A549 (cell line): ENCODE measurements at regions of chr1 and their contacts with region 1.

Region 1: DNA sequence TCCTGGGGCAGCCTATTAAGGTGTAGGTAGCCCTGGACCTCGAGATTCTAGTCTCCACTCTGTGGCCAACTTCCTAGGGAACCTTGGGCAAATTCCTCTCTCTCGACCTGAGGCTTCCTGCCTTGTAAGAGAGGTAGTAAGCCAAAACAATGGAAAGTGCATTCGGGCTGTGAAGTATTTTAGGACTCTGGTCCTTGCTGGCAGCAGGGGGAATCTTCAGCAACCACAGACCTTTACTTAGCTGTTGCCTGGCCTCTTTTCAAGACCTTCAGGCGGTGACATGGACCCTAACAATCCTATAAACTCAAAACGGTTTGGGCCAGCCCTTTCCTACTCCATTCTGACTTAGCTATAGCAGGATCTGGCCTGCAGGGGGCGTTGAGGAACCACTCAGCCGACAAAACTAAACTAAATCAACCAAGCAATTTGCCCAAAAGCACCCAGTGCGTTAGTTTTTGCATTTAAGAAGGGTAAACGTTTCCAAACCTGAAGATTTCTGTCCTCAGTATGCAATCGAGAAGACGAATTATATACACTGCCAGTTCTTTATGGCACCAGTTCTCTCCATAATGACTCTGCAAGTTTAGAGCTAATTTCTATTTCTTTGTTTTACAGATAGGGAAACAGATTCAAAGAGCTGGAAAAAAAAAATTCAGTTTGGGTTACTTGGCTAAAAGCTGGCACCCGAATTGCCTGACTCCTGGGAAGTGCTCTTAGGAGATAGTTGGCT is 10.9 kb upstream of the SESN2 start:
- DNase-seq: peak; percentile 58 to 72
- ATAC-seq: peak; percentile 63 to 75
- H3K4me3 ChIP-seq: peak overlapping the region; percentile 29; the same call in 1 of the 3 replicates
- H3K27ac ChIP-seq: peak overlapping the region; percentile 74 to 85
- H3K4me1 ChIP-seq: peaks cover 45% of the 10 kb centered on the region
- CTCF ChIP-seq: peak; percentile 78
- EP300 ChIP-seq: no peak
- POLR2A ChIP-seq: no peak
- RAD21 ChIP-seq: peak; percentile 85 to 86

Region 2: GRCh38 chr1:27959400-27960217 is 288.8 kb before region 1 on chr1 and contains the start of gene XKR8:
- CTCF ChIA-PET with region 1: no interaction called
- POLR2A ChIA-PET with region 1: no interaction called
- DNase-seq: peak; percentile 76 to 77
- ATAC-seq: peak; percentile 91 to 96
- H3K4me3 ChIP-seq: peak within 1 kb of the TSS; percentile 54
- H3K27ac ChIP-seq: peak within 1 kb of the TSS; percentile 78 to 92
- H3K4me1 ChIP-seq: peaks cover 14% of the 10 kb centered on the region
- CTCF ChIP-seq: peak; percentile 32; the same call in 1 of the 3 replicates
- EP300 ChIP-seq: no peak
- POLR2A ChIP-seq: peak; percentile 52
- RAD21 ChIP-seq: no peak
- polyA plus RNA-seq, gene XKR8: 3.3 and 4.2 TPM in 2 replicates

Region 3: GRCh38 chr1:28176492-28177470 is 71.7 kb before region 1 on chr1 and contains the start of gene PTAFR:
- CTCF ChIA-PET with region 1: no interaction called
- POLR2A ChIA-PET with region 1: no interaction called
- DNase-seq: no peak
- ATAC-seq: no peak
- H3K4me3 ChIP-seq: no peak within 1 kb of the TSS
- H3K27ac ChIP-seq: no peak within 1 kb of the TSS; a peak in 1 of 6 replicates
- H3K4me1 ChIP-seq: no peaks in the 10 kb centered on the region
- CTCF ChIP-seq: no peak
- EP300 ChIP-seq: no peak
- POLR2A ChIP-seq: no peak
- RAD21 ChIP-seq: no peak
- polyA plus RNA-seq, gene PTAFR: 0.58 and 0.83 TPM in 2 replicates

Region 4: DNA sequence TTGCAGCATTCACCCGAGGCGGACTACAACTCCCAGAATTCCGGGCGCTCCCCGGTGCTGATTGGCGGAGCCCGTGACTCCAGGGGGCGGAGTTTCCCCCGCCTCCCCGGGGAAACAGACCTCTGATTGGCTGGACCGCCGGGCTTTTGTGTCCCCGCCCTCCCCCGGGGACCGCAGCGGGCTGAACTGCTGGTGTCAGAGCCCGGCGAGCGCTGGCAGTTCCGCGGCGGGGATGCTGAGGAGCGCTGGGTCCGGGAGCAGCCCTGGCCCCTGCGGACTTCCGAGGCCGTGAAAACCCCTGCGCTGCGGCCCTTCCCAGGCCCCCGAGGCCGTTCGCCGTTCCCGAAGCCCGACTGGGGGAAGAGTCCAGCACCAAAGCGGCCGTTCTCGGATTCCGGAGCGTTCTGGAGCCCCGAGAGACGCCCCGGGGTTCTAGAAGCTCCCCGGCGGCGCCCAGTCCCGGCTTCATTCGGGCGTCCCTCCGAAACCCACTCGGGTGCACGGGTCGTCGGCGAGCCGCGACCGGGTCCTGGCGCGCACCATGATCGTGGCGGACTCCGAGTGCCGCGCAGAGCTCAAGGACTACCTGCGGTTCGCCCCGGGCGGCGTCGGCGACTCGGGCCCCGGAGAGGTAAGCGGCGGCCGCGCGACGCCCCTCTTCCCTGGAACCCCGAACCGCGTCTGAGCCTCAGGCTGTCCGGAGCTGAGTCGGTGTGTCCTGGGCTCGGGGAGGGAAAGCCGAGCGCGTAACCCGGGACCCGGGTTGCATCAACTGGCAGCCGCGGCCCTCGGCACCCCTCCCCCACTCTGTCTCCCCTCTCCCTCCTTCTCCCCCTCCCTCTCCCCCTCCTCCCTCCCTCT is 11.1 kb after region 1 on chr1 and contains the start of gene SESN2:
- CTCF ChIA-PET with region 1: interaction called, 34 read pairs
- POLR2A ChIA-PET with region 1: interaction called, 25 read pairs
- DNase-seq: peak; percentile 85 to 94
- ATAC-seq: peak; percentile 94 to 95
- H3K4me3 ChIP-seq: peak within 1 kb of the TSS; percentile 100
- H3K27ac ChIP-seq: peak within 1 kb of the TSS; percentile 99
- H3K4me1 ChIP-seq: peaks cover 45% of the 10 kb centered on the region
- CTCF ChIP-seq: no peak
- EP300 ChIP-seq: peak in 1 of 2 experiments; percentile 41; a peak in 1 of 5 replicates
- POLR2A ChIP-seq: peak; percentile 68
- RAD21 ChIP-seq: no peak
- polyA plus RNA-seq, gene SESN2: 16.6 and 16.7 TPM in 2 replicates

Region 5: DNA sequence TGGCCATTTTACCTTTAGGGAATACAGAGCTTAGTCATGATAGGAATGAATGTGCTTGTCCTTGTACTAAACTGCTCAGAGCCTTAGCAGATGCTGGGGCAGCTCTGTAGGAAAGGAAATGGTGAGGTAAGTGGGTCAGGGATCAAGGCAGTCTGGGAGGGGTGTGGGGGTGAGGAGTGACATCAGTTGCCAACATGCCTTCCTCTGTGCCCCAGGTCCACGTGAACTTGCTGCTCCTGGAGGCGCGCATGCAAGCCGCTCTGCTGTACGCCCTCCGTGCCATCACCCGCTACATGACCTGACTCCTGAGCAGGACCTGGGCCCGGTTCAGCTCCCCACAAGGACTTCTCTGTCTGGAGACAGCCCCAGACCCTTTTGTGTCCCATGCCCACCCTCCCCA is 32.1 kb after region 1 on chr1:
- CTCF ChIA-PET with region 1: interaction called, 15 read pairs
- POLR2A ChIA-PET with region 1: interaction called, 3 read pairs
- DNase-seq: no peak
- ATAC-seq: 0 out of 6 replicates have a peak, but pooled peaks of 1 of the 2 experiments have one; percentile 16
- H3K4me3 ChIP-seq: no peak overlapping the region
- H3K27ac ChIP-seq: no peak overlapping the region
- H3K4me1 ChIP-seq: no peaks in the 10 kb centered on the region
- CTCF ChIP-seq: no peak
- EP300 ChIP-seq: no peak
- POLR2A ChIP-seq: no peak
- RAD21 ChIP-seq: no peak

Region 6: DNA sequence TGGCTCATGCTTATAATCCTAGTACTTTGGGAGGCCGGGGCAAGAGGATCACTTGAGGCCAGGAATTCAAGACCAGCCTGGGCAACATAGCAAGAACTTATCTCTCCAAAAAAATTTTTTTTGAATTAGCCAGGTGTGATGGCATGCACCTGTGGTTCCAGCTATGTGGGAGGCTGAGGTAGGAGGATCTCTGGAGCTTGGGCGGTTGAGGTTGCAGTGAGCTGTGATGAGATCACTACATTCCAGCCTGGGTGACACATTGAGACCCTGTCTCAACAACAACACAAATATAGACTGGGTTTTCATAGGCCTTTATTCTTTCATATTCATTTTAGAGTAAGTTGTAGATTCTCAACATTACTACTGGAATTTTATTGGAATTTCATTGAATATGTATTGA is 93.1 kb after region 1 on chr1:
- CTCF ChIA-PET with region 1: interaction called, 12 read pairs
- POLR2A ChIA-PET with region 1: no interaction called
- DNase-seq: no peak
- ATAC-seq: no peak
- H3K4me3 ChIP-seq: no peak overlapping the region
- H3K27ac ChIP-seq: no peak overlapping the region
- H3K4me1 ChIP-seq: peaks cover 6% of the 10 kb centered on the region; the same call in 1 of the 3 replicates
- CTCF ChIP-seq: no peak
- EP300 ChIP-seq: no peak
- POLR2A ChIP-seq: no peak
- RAD21 ChIP-seq: no peak

Region 7: DNA sequence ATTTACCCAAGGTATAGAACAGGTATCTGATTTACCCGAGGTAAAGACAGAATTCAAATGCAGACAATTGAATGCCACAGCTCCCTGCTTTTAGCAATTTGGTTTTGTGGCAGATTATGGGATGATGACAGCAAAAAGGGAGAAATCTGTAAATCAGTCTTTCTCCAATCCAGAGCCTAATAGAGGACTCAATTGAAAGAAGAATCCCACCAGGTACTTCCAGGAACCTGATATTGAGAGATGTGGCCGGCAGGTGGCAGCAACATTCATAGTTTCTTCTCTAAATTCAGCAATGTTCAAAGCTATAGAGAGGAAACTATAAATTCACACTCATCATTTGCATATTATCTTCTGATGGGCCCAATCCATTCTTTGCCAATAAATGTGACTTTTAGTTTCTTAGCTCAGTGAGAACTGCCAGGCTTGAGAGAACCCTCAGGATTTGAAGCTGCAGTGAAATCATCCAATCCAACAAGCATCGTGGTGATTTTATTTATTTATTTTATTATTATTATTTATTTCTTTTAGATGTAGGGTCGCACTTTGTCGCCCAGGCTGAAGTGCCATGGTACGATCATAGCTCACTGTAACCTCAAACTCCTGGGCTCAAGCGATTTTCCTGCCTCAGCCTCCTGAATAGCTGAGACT is 111.3 kb after region 1 on chr1:
- CTCF ChIA-PET with region 1: interaction called, 47 read pairs
- POLR2A ChIA-PET with region 1: interaction called, 3 read pairs
- DNase-seq: peak; percentile 48 to 64
- ATAC-seq: peak; percentile 80 to 81; a peak in 5 of 6 replicates
- H3K4me3 ChIP-seq: no peak overlapping the region
- H3K27ac ChIP-seq: no peak overlapping the region
- H3K4me1 ChIP-seq: no peaks in the 10 kb centered on the region; the same call in 2 of the 3 replicates
- CTCF ChIP-seq: peak; percentile 65
- EP300 ChIP-seq: no peak
- POLR2A ChIP-seq: no peak
- RAD21 ChIP-seq: peak; percentile 61 to 65